Dorsolateral prefrontal cortex (tissue), 120 donors: ENCODE measurements at regions of chr7 and their contacts with region 1.

Region 1: GRCh38 chr7:47979145-47979831 is at the start of gene HUS1:
- DNase-seq: peak; percentile 79 to 93 (median 88)
- H3K4me3 ChIP-seq: peak within 1 kb of the TSS; percentile 56 to 92 (median 79)
- H3K27ac ChIP-seq: peak within 1 kb of the TSS in 57 of 59 donors; percentile 31 to 91 (median 72)
- H3K27me3 ChIP-seq: no peaks in the 10 kb centered on the region
- CTCF ChIP-seq: peak in 19 of 56 donors; percentile 7 to 55 (median 23)
- total RNA-seq, gene HUS1: 24.5 to 61.6 (median 38.5) TPM

Region 2: DNA sequence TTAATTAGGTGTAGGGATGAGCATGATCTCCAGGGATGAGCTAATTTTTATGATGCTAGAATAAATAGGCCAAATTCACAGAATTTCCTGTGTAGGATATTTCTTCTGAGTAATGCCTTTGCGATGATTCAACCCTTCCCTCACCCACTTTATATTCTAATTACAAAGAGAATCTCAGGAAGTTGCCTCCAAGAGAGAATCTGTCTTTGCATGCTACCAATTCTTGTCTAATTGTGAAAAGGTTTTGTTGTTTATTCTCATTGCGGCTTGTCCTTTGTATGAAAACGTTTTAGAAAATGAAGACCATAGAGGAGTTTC is 62.3 kb after region 1 on chr7:
- intact Hi-C with region 1: no loop called
- DNase-seq: no peak
- H3K4me3 ChIP-seq: no peak overlapping the region
- H3K27ac ChIP-seq: no peak overlapping the region
- H3K27me3 ChIP-seq: no peaks in the 10 kb centered on the region
- CTCF ChIP-seq: no peak

Region 3: GRCh38 chr7:48088559-48089045 is 109.3 kb after region 1 on chr7:
- intact Hi-C with region 1: loop called in 1 of 2 experiments (anchors 2 kb)
- DNase-seq: peak in 8 of 10 donors; percentile 21 to 76 (median 46)
- H3K4me3 ChIP-seq: peak overlapping the region; percentile 68 to 95 (median 87)
- H3K27ac ChIP-seq: peak overlapping the region in 56 of 59 donors; percentile 7 to 93 (median 82)
- H3K27me3 ChIP-seq: no peaks in the 10 kb centered on the region
- CTCF ChIP-seq: no peak